Activated naive CD4-positive, alpha-beta T cell treated with anti-CD3 and anti-CD28 coated beads for 36 hours (primary cell): ENCODE measurements at regions of chr12 and their contacts with region 1.

Region 1: GRCh38 chr12:11581179-11581755 is 68.2 kb upstream of the ETV6 start:
- DNase-seq: peak; percentile 84
- H3K4me3 Mint-ChIP-seq: no peak overlapping the region
- H3K27ac Mint-ChIP-seq: no peak overlapping the region
- H3K4me1 Mint-ChIP-seq: peaks cover 18% of the 10 kb centered on the region
- H3K27me3 Mint-ChIP-seq: peaks cover 6% of the 10 kb centered on the region

Region 2: DNA sequence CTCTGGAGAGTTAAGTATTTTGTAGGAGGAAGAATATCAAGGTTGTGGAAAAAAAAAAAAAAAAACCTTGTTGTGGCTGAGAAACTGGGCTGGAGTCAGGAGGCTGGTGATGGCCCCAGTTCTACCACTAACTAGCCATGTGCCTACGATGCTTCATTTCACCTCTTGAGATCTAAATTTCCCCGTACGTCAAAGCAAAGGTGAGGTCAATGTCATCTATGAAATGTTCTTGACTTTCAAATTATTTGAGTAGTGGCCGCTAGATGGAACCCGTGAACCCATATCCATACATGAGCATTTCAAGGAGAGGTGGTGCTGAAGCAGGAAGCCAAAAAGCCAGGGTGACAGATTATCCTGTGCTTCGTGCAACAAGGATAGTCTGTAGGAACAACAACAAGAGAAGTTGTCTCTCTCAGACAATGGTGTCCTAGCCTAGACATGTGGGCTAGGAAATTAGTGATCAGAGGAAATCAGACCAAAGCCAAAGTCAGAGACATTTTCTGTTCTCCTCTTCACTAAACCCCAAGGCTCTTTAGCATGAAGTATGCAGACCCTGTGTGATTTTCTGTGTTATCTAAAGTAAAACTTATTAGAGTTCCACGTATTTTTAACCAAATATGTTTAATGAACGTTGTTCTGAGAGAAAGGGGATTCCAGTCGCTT is 27.3 kb before region 1 on chr12:
- CTCF ChIA-PET with region 1: interaction called, 15 read pairs
- intact Hi-C with region 1: loop called (anchors 1 kb)
- DNase-seq: peak; percentile 79
- H3K4me3 Mint-ChIP-seq: no peak overlapping the region
- H3K27ac Mint-ChIP-seq: no peak overlapping the region
- H3K4me1 Mint-ChIP-seq: peaks cover 22% of the 10 kb centered on the region
- H3K27me3 Mint-ChIP-seq: no peaks in the 10 kb centered on the region

Region 3: GRCh38 chr12:11621797-11622423 is 40.6 kb after region 1 on chr12:
- CTCF ChIA-PET with region 1: interaction called, 3 read pairs
- intact Hi-C with region 1: loop called (anchors 2 kb)
- DNase-seq: peak; percentile 55
- H3K4me3 Mint-ChIP-seq: no peak overlapping the region
- H3K27ac Mint-ChIP-seq: no peak overlapping the region
- H3K4me1 Mint-ChIP-seq: peaks cover 2% of the 10 kb centered on the region
- H3K27me3 Mint-ChIP-seq: no peaks in the 10 kb centered on the region

Region 4: DNA sequence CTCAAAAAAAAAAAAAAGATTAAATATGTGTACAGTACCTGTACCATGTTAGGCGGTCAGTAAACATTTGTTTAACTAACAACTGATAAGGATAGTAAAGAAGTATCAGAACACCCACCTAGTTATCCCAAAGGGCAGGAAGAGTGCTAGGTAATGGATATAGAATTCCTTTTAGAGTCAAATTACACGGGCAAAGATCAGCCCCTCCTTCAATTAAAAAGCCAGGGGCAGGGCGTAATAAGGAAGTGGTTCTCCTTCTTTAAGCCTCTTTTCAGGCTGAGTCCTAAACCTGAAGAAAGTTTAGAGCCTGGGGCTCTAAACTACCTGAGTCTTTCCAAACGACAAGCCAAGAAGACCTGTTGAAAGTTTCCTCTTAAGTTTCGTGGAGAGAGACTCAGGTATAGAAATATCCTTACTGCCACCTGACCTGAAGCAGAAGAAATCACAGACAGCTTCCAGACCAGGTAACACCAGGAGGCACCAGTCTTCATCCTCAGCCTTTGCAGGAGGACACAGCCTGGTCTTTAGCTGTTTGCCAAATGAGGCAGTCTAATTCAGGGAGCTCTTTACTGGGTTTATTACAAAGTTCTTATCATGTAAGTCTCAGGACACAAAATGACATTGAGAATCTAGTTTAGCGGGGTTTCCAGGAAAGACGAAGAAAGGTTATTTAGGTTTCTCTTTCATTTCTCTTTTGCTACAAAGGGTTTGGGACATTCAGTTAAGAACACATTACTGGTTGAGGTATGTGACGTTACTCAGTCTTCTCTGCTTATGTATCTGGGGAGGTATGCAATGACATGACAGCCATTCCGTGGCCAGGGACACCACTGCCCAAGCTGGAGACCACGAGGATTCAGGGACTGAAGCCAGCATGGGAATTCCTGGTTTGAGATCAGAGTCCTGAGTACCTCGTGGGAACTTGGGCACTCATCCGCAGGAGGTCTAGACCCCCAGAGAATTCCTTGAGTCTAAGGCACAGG is 489.7 kb after region 1 on chr12 and contains the start of gene BCL2L14:
- CTCF ChIA-PET with region 1: interaction called, 7 read pairs
- intact Hi-C with region 1: loop called (anchors 1 kb)
- DNase-seq: peak; percentile 52
- H3K4me3 Mint-ChIP-seq: peak within 1 kb of the TSS; percentile 85
- H3K27ac Mint-ChIP-seq: peak within 1 kb of the TSS; percentile 90
- H3K4me1 Mint-ChIP-seq: peaks cover 36% of the 10 kb centered on the region
- H3K27me3 Mint-ChIP-seq: no peaks in the 10 kb centered on the region
- total RNA-seq, gene BCL2L14: 19.4 to 21.8 TPM

Region 5: DNA sequence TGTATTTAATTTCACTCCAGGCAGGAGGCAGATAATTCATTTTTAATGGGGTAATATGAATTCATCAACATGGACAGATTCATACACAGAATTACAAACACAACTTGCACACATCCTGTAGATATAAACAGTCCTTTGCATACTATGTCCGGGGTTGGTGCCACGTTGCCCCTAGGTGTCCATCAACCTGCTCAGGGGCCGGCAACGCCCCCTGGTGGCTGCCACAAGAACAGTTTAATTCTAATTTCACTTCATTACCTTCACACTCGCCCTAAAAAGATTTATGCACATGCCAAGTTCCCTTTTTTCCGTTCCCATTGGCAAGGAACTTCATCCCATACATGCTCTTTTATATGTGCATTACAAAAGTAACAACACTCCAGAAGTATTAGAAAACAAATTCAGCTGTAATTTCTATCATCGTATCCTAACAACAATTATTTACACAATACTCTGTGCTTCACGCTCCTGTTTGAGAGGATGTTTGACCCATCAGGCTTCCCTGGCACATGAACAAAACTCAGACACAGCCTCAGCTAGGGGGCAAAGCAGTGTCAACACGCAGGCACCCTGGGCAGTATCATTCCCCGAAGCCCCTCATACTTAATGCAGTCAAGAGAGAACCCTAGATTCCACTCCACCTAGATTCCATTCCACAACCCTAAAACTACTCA is 753.2 kb after region 1 on chr12:
- CTCF ChIA-PET with region 1: interaction called, 5 read pairs
- intact Hi-C with region 1: loop called (anchors 2 kb)
- DNase-seq: peak; percentile 74
- H3K4me3 Mint-ChIP-seq: no peak overlapping the region
- H3K27ac Mint-ChIP-seq: no peak overlapping the region
- H3K4me1 Mint-ChIP-seq: peaks cover 27% of the 10 kb centered on the region
- H3K27me3 Mint-ChIP-seq: no peaks in the 10 kb centered on the region

Region 6: GRCh38 chr12:12704593-12705230 is 1123.4 kb after region 1 on chr12:
- CTCF ChIA-PET with region 1: interaction called, 4 read pairs
- intact Hi-C with region 1: loop called (anchors 5 kb)
- DNase-seq: peak; percentile 60
- H3K4me3 Mint-ChIP-seq: no peak overlapping the region
- H3K27ac Mint-ChIP-seq: no peak overlapping the region
- H3K4me1 Mint-ChIP-seq: peaks cover 23% of the 10 kb centered on the region
- H3K27me3 Mint-ChIP-seq: no peaks in the 10 kb centered on the region